ENCODE measurements at regions of chr6 and their contacts with region 1.

Region 1: GRCh38 chr6:54717849-54718455 is 128.6 kb upstream of the FAM83B start:
- DNase-seq: peak in 1 of 3 donors; percentile 14
- ATAC-seq: peak; percentile 61 to 64
- H3K4me3 ChIP-seq: no peak overlapping the region
- H3K27ac ChIP-seq: no peak overlapping the region
- H3K4me1 ChIP-seq: no peaks in the 10 kb centered on the region
- H3K27me3 ChIP-seq: no peaks in the 10 kb centered on the region

Region 2: GRCh38 chr6:55069132-55069781 is 351.3 kb after region 1 on chr6:
- intact Hi-C with region 1: loop called in 1 of 4 experiments (anchors 5 kb)
- DNase-seq: no peak
- ATAC-seq: no peak
- H3K4me3 ChIP-seq: no peak overlapping the region
- H3K27ac ChIP-seq: no peak overlapping the region
- H3K4me1 ChIP-seq: no peaks in the 10 kb centered on the region
- H3K27me3 ChIP-seq: no peaks in the 10 kb centered on the region